ENCODE measurements at regions of chr15 and their contacts with region 1.

Region 1: GRCh38 chr15:62847900-62848489 is 194.6 kb upstream of the TPM1 start:
- DNase-seq: peak; percentile 68
- H3K4me3 Mint-ChIP-seq: no peak overlapping the region
- H3K27ac Mint-ChIP-seq: no peak overlapping the region
- H3K4me1 Mint-ChIP-seq: no peaks in the 10 kb centered on the region
- H3K27me3 Mint-ChIP-seq: peaks cover 4% of the 10 kb centered on the region

Region 2: DNA sequence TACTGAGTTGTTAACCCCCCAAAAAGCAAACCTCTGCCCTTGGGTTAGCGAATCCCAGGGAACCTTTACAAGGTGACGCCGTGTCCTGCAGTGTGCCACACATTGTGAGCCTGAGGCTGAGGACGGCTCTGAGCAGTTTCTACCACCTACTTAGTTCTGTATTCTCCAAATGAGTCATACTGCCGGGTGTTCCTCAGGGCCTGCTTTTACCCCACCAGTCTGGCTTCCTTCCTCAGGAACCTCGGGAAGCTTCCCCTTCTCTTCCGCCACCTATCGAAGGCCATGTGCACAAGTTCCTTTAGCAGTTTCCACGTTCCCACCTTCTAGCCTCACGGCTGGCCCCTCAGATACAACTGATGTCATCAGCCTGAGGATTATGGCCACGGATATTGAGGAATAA is 189.5 kb before region 1 on chr15:
- CTCF ChIA-PET with region 1: no interaction called
- POLR2A ChIA-PET with region 1: no interaction called
- intact Hi-C with region 1: no loop called
- DNase-seq: peak; percentile 31
- H3K4me3 Mint-ChIP-seq: no peak overlapping the region
- H3K27ac Mint-ChIP-seq: no peak overlapping the region
- H3K4me1 Mint-ChIP-seq: peaks cover 7% of the 10 kb centered on the region
- H3K27me3 Mint-ChIP-seq: peaks cover 6% of the 10 kb centered on the region

Region 3: GRCh38 chr15:63093486-63094205 is 245.7 kb after region 1 on chr15:
- CTCF ChIA-PET with region 1: interaction called, 17 read pairs
- POLR2A ChIA-PET with region 1: no interaction called
- intact Hi-C with region 1: loop called (anchors 1 kb)
- DNase-seq: peak; percentile 83
- H3K4me3 Mint-ChIP-seq: no peak overlapping the region
- H3K27ac Mint-ChIP-seq: no peak overlapping the region
- H3K4me1 Mint-ChIP-seq: no peaks in the 10 kb centered on the region
- H3K27me3 Mint-ChIP-seq: no peaks in the 10 kb centered on the region